ENCODE measurements at regions of chr6 and their contacts with region 1.

Region 1: DNA sequence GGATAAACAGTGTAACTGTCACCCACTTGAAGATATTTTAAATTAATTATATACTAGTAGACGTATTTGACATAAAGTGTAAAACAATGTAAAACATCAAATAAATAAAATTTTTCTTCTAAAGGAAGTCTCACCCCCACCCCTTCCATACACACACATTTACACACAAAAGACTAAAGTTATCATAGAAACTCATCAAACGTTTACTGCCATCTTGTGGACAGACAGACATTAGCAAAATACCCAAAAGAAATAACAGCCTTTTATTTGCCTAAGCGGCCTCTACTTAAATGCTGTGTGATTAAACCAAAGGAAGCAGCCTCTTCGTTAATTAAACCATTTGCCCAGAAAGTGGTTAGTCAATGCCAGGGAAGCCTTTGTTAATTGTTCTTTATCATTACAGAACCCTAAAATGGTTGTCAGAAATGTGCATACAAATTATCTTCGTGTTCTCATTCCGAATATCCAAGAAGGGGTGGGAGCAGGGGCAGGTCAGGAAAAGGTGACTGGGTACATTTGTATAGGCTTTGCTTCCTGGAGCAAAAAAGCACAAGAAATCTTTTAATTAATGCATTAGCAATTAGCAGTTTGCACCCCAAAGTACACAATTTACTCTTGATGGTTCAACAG is 176.2 kb upstream of the SASH1 start:
- H3K4me3 Mint-ChIP-seq: no peak overlapping the region
- H3K27ac Mint-ChIP-seq: no peak overlapping the region
- H3K4me1 Mint-ChIP-seq: no peaks in the 10 kb centered on the region
- H3K27me3 Mint-ChIP-seq: peaks cover 2% of the 10 kb centered on the region

Region 2: GRCh38 chr6:147390909-147391536 is 775.4 kb before region 1 on chr6:
- intact Hi-C with region 1: loop called (anchors 5 kb)
- H3K4me3 Mint-ChIP-seq: no peak overlapping the region
- H3K27ac Mint-ChIP-seq: no peak overlapping the region
- H3K4me1 Mint-ChIP-seq: no peaks in the 10 kb centered on the region
- H3K27me3 Mint-ChIP-seq: no peaks in the 10 kb centered on the region

Region 3: DNA sequence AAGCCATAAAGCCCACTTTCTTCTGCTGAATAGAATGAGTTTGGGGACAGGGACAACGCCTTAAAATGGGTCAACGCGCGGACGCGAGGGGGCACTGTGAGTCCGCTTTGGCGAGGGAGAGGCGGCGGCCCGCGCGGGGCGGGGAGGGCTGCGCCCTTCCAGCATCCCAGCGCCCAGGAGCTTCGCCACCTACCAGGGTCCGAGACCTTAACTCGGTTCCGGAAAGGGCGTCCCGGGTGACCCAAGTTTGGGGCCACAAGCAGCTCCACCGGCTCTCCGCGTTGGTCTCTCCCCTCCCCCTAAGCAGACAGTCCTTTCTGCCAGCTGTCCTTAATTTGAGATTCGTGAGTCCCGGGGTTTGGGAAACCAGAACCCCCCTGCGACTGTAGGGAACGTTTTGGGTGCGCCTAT is 659.7 kb before region 1 on chr6:
- intact Hi-C with region 1: loop called (anchors 2 kb)
- H3K4me3 Mint-ChIP-seq: no peak overlapping the region
- H3K27ac Mint-ChIP-seq: no peak overlapping the region
- H3K4me1 Mint-ChIP-seq: peaks cover 20% of the 10 kb centered on the region
- H3K27me3 Mint-ChIP-seq: peaks cover 68% of the 10 kb centered on the region

Region 4: DNA sequence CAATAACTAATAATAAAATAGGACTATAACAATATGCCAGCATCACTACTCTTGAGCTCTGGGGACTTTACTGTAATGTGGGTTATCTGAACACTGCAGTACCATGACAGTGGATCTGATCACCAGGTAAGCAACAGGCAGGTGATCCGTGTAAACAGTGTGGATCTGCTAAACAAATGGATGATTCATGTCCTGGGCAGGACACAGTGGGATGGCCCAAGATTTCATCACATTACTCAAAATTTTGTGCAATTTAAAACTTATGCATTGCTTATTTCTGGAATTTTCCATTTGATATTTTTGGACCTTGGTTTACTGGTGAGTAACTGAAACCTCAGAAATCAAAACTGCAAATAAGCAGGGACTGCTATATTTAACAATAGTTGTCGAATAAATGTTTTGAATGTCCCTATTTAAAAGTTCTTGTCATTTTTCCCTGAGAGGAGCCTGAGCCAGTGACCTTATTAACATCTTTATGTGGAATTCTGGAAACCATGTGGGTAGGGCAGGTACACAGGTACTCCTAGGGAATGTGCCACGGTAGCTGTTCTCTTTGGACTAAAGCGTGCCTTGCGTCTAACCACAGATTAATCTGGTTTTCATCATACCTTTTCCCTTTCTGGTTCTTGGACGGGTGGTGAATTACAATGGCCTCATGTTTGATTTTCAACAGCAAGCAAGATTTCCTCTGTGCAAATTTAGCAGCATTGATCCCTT is 38.3 kb before region 1 on chr6:
- intact Hi-C with region 1: no loop called
- H3K4me3 Mint-ChIP-seq: no peak overlapping the region
- H3K27ac Mint-ChIP-seq: no peak overlapping the region
- H3K4me1 Mint-ChIP-seq: no peaks in the 10 kb centered on the region
- H3K27me3 Mint-ChIP-seq: no peaks in the 10 kb centered on the region

Region 5: DNA sequence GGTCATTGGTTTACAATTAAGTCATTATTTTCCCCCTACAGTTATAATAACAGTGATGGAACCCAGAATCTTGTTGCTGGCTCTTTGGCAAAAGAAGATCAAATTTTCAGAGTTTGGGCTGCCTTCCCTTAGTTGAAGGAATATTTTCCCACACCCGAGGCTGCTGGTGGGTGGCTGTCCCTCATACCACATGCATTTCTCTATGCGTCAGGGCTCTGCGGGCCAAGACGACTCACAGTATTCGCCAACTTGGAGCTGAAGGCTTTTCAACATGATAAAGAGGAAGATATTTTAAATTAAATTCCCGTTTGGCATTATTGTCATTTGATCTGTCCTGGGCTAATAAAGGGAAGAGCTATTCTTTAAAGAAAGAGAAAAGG is 74.0 kb after region 1 on chr6:
- intact Hi-C with region 1: no loop called
- H3K4me3 Mint-ChIP-seq: no peak overlapping the region
- H3K27ac Mint-ChIP-seq: no peak overlapping the region
- H3K4me1 Mint-ChIP-seq: peaks cover 10% of the 10 kb centered on the region
- H3K27me3 Mint-ChIP-seq: peaks cover 9% of the 10 kb centered on the region